ENCODE measurements at regions of chr2 and their contacts with region 1.

Region 1: GRCh38 chr2:84905181-84906107 is at the start of gene TMSB10:
- DNase-seq: peak; percentile 87
- H3K4me3 Mint-ChIP-seq: peak within 1 kb of the TSS; percentile 85
- H3K27ac Mint-ChIP-seq: peak within 1 kb of the TSS; percentile 83
- H3K4me1 Mint-ChIP-seq: peaks cover 29% of the 10 kb centered on the region
- H3K27me3 Mint-ChIP-seq: no peaks in the 10 kb centered on the region
- CTCF ChIP-seq: peak; percentile 10
- total RNA-seq, gene TMSB10: 3,313 and 3,349 TPM in 2 replicates

Region 2: GRCh38 chr2:84881581-84882414 is 23.6 kb before region 1 on chr2:
- CTCF ChIA-PET with region 1: interaction called, 4 read pairs
- POLR2A ChIA-PET with region 1: interaction called, 65 read pairs
- intact Hi-C with region 1: loop called (anchors 1 kb)
- DNase-seq: peak; percentile 88
- H3K4me3 Mint-ChIP-seq: peak overlapping the region; percentile 88
- H3K27ac Mint-ChIP-seq: peak overlapping the region; percentile 52
- H3K4me1 Mint-ChIP-seq: peaks cover 17% of the 10 kb centered on the region
- H3K27me3 Mint-ChIP-seq: no peaks in the 10 kb centered on the region
- CTCF ChIP-seq: peak; percentile 47

Region 3: DNA sequence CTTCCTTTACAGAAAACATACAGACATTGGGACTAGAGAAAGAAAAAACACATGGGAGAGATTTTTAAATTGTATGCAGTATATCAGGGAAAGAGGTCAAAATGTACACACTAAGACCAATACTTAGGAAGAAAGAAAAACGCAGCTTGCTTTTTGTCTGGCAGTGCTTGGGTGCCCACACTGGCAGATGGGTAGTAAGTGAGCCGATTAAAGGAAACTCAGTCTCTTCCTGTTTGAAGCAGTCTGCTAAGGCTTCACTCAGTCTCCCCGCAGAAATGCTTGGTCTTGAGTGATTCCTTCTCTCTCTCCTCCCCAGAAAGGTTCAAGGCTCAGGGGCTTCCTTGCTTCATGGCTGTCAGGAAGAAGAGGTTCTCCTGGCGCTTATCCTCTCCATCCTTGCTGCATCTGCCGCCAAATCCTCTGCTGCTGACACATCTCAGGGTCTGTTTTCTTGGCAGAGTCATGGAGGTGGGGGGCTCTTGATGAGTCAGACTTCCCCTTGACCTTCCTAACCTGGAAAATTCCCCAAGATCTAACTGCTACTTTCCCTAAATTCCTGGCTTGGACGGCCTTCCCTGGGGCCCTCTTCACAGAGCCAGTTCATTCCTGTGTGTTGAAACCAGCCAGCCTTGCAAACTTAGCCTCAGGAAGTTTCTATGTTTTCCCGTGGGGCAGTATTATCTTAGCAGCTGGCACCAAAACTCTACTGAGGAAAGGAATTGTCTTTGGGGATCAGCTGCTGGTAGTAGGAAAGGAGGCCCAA is 10.5 kb before region 1 on chr2:
- CTCF ChIA-PET with region 1: interaction called, 3 read pairs
- POLR2A ChIA-PET with region 1: interaction called, 65 read pairs
- intact Hi-C with region 1: no loop called
- DNase-seq: peak; percentile 55
- H3K4me3 Mint-ChIP-seq: no peak overlapping the region
- H3K27ac Mint-ChIP-seq: peak overlapping the region; percentile 41
- H3K4me1 Mint-ChIP-seq: peaks cover 30% of the 10 kb centered on the region
- H3K27me3 Mint-ChIP-seq: no peaks in the 10 kb centered on the region
- CTCF ChIP-seq: no peak

Region 4: DNA sequence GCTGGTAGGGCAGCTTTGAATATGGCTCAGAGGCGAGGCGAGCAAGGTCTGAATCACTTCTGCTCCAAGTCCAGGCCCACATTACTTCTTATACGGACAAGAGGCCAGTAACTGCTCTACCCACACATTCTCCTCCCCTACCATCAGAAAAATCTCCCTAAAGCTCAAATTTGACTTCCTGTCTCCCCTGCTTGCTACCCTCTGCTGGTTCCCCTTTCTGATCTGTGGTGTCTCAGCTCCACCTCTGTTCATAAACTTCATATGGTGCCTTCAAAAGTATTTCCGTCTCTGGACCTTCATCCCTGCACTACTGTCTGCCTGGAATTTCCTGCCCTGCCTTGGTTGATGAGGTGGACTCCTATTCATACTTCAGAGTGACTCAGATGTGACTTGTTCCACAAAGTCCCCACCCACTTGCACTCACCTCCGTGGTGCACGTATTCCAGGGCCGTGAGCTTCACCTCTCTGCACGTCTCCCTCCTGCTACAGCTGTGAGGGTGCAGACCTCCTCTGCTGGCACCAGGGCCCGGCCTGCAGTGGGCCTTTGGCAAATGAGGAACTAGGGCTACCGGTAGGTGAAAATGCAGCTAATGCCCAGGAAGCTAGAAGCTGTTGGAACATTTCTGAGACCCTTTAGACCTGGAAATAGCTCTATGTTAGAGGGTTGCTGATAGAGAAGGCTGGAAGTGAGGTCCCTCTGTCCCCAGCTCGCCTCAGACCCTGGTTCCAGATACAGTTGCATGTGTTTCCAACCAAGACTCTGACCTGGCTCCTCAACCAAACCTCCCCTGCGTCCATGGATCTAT is 41.0 kb after region 1 on chr2:
- CTCF ChIA-PET with region 1: interaction called, 12 read pairs
- POLR2A ChIA-PET with region 1: interaction called, 19 read pairs
- intact Hi-C with region 1: no loop called
- DNase-seq: peak; percentile 85
- H3K4me3 Mint-ChIP-seq: peak overlapping the region; percentile 8
- H3K27ac Mint-ChIP-seq: peak overlapping the region; percentile 89
- H3K4me1 Mint-ChIP-seq: peaks cover 13% of the 10 kb centered on the region
- H3K27me3 Mint-ChIP-seq: no peaks in the 10 kb centered on the region
- CTCF ChIP-seq: no peak

Region 5: GRCh38 chr2:84970868-84971509 is 65.5 kb after region 1 on chr2 and contains the start of gene KCMF1:
- CTCF ChIA-PET with region 1: no interaction called
- POLR2A ChIA-PET with region 1: interaction called, 44 read pairs
- intact Hi-C with region 1: no loop called
- DNase-seq: peak; percentile 69
- H3K4me3 Mint-ChIP-seq: peak within 1 kb of the TSS; percentile 97
- H3K27ac Mint-ChIP-seq: peak within 1 kb of the TSS; percentile 97
- H3K4me1 Mint-ChIP-seq: peaks cover 12% of the 10 kb centered on the region
- H3K27me3 Mint-ChIP-seq: no peaks in the 10 kb centered on the region
- CTCF ChIP-seq: no peak
- total RNA-seq, gene KCMF1: 169 and 170 TPM in 2 replicates

Region 6: GRCh38 chr2:85173909-85174308 is 268.5 kb after region 1 on chr2:
- CTCF ChIA-PET with region 1: no interaction called
- POLR2A ChIA-PET with region 1: no interaction called
- intact Hi-C with region 1: no loop called
- DNase-seq: no peak
- H3K4me3 Mint-ChIP-seq: no peak overlapping the region
- H3K27ac Mint-ChIP-seq: no peak overlapping the region
- H3K4me1 Mint-ChIP-seq: no peaks in the 10 kb centered on the region
- H3K27me3 Mint-ChIP-seq: no peaks in the 10 kb centered on the region
- CTCF ChIP-seq: no peak